HepG2 (cell line): ENCODE measurements at regions of chr13 and their contacts with region 1.

Region 1: GRCh38 chr13:77026818-77027585 is at the start of gene FBXL3:
- DNase-seq: peak; percentile 46
- ATAC-seq: peak; percentile 78
- H3K4me3 ChIP-seq: peak within 1 kb of the TSS; percentile 86 to 98 (median 95)
- H3K27ac ChIP-seq: peak within 1 kb of the TSS; percentile 96
- H3K4me1 ChIP-seq: peaks cover 48% of the 10 kb centered on the region
- H3K27me3 ChIP-seq: no peaks in the 10 kb centered on the region; a peak in 1 of 5 replicates
- CTCF ChIP-seq: no peak
- EP300 ChIP-seq: no peak
- POLR2A ChIP-seq: peak; percentile 57 to 92
- RAD21 ChIP-seq: peak; percentile 42; the same call in 1 of the 2 replicates
- total RNA-seq, gene FBXL3: 18.5 and 22.6 TPM in 2 replicates

Region 2: GRCh38 chr13:76903544-76904162 is 123.3 kb before region 1 on chr13:
- CTCF ChIA-PET with region 1: no interaction called
- POLR2A ChIA-PET with region 1: no interaction called
- in situ Hi-C with region 1: no loop called
- intact Hi-C with region 1: no loop called
- DNase-seq: peak; percentile 49
- ATAC-seq: peak; percentile 87
- H3K4me3 ChIP-seq: no peak overlapping the region
- H3K27ac ChIP-seq: no peak overlapping the region
- H3K4me1 ChIP-seq: no peaks in the 10 kb centered on the region
- H3K27me3 ChIP-seq: no peaks in the 10 kb centered on the region; a peak in 3 of 5 replicates
- CTCF ChIP-seq: peak; percentile 87
- EP300 ChIP-seq: no peak
- POLR2A ChIP-seq: no peak
- RAD21 ChIP-seq: peak; percentile 68

Region 3: GRCh38 chr13:76991796-76992547 is 35.0 kb before region 1 on chr13 and contains the start of gene CLN5:
- CTCF ChIA-PET with region 1: no interaction called
- POLR2A ChIA-PET with region 1: interaction called, 12 read pairs
- in situ Hi-C with region 1: no loop called
- intact Hi-C with region 1: no loop called
- DNase-seq: peak; percentile 86
- ATAC-seq: peak; percentile 96
- H3K4me3 ChIP-seq: peak within 1 kb of the TSS; percentile 70 to 80 (median 73)
- H3K27ac ChIP-seq: peak within 1 kb of the TSS; percentile 79
- H3K4me1 ChIP-seq: peaks cover 27% of the 10 kb centered on the region
- H3K27me3 ChIP-seq: peaks cover 0 to 12% of the 10 kb centered on the region in 2 experiments; a peak in 3 of 5 replicates
- CTCF ChIP-seq: no peak
- EP300 ChIP-seq: peak; percentile 9 to 42; a peak in 2 of 4 replicates
- POLR2A ChIP-seq: peak; percentile 87
- RAD21 ChIP-seq: peak; percentile 28; the same call in 1 of the 2 replicates
- total RNA-seq, gene CLN5: 6.7 and 13.7 TPM in 2 replicates

Region 4: GRCh38 chr13:77062097-77062496 is 35.1 kb after region 1 on chr13:
- CTCF ChIA-PET with region 1: no interaction called
- POLR2A ChIA-PET with region 1: no interaction called
- in situ Hi-C with region 1: no loop called
- intact Hi-C with region 1: loop called (anchors 5 kb)
- DNase-seq: no peak
- ATAC-seq: no peak
- H3K4me3 ChIP-seq: no peak overlapping the region
- H3K27ac ChIP-seq: peak overlapping the region; percentile 18
- H3K4me1 ChIP-seq: peaks cover 13% of the 10 kb centered on the region
- H3K27me3 ChIP-seq: no peaks in the 10 kb centered on the region; a peak in 1 of 5 replicates
- CTCF ChIP-seq: no peak
- EP300 ChIP-seq: no peak
- POLR2A ChIP-seq: no peak
- RAD21 ChIP-seq: no peak

Region 5: DNA sequence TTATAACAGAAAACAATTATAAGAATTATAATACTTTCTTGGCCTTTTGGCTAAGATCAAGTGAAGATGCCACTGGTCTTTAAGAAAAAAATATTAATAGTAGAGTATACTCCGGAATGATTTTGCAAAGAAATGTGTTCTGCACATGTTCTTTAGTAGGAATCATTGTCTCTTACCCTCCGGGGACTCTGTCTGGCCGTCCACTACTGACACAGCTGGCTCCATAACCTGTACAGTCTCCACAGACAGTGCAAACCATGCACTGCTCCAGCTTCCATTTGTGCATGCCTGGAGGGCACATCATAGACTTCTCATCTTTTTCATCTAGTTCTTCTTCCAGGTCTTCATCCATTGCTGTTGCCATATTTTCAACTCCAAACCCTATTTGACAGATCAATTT is 224.0 kb after region 1 on chr13:
- CTCF ChIA-PET with region 1: no interaction called
- POLR2A ChIA-PET with region 1: no interaction called
- in situ Hi-C with region 1: no loop called
- intact Hi-C with region 1: no loop called
- DNase-seq: no peak
- ATAC-seq: no peak
- H3K4me3 ChIP-seq: no peak overlapping the region
- H3K27ac ChIP-seq: no peak overlapping the region
- H3K4me1 ChIP-seq: no peaks in the 10 kb centered on the region
- H3K27me3 ChIP-seq: no peaks in the 10 kb centered on the region
- CTCF ChIP-seq: no peak
- EP300 ChIP-seq: no peak
- POLR2A ChIP-seq: no peak
- RAD21 ChIP-seq: no peak

Region 6: GRCh38 chr13:77329133-77329910 is 302.3 kb after region 1 on chr13:
- CTCF ChIA-PET with region 1: no interaction called
- POLR2A ChIA-PET with region 1: no interaction called
- in situ Hi-C with region 1: no loop called
- intact Hi-C with region 1: loop called (anchors 10 kb)
- DNase-seq: peak; percentile 85
- ATAC-seq: peak; percentile 77
- H3K4me3 ChIP-seq: peak overlapping the region; percentile 62 to 78 (median 76)
- H3K27ac ChIP-seq: peak overlapping the region; percentile 56
- H3K4me1 ChIP-seq: peaks cover 33% of the 10 kb centered on the region
- H3K27me3 ChIP-seq: peaks cover 0 to 4% of the 10 kb centered on the region in 2 experiments; a peak in 1 of 5 replicates
- CTCF ChIP-seq: no peak; the same call in 1 of the 2 replicates
- EP300 ChIP-seq: no peak; a peak in 1 of 4 replicates
- POLR2A ChIP-seq: peak; percentile 55 to 77
- RAD21 ChIP-seq: no peak

Region 7: GRCh38 chr13:78147905-78148304 is 1120.9 kb after region 1 on chr13:
- CTCF ChIA-PET with region 1: no interaction called
- POLR2A ChIA-PET with region 1: no interaction called
- in situ Hi-C with region 1: no loop called
- intact Hi-C with region 1: no loop called
- DNase-seq: no peak
- ATAC-seq: no peak
- H3K4me3 ChIP-seq: no peak overlapping the region
- H3K27ac ChIP-seq: no peak overlapping the region
- H3K4me1 ChIP-seq: no peaks in the 10 kb centered on the region
- H3K27me3 ChIP-seq: no peaks in the 10 kb centered on the region
- CTCF ChIP-seq: no peak
- EP300 ChIP-seq: no peak
- POLR2A ChIP-seq: no peak
- RAD21 ChIP-seq: no peak